Activated B cell treated with CpG ODN at 0.5 μM for 24 hours (primary cell): ENCODE measurements at regions of chr1 and their contacts with region 1.

Region 1: DNA sequence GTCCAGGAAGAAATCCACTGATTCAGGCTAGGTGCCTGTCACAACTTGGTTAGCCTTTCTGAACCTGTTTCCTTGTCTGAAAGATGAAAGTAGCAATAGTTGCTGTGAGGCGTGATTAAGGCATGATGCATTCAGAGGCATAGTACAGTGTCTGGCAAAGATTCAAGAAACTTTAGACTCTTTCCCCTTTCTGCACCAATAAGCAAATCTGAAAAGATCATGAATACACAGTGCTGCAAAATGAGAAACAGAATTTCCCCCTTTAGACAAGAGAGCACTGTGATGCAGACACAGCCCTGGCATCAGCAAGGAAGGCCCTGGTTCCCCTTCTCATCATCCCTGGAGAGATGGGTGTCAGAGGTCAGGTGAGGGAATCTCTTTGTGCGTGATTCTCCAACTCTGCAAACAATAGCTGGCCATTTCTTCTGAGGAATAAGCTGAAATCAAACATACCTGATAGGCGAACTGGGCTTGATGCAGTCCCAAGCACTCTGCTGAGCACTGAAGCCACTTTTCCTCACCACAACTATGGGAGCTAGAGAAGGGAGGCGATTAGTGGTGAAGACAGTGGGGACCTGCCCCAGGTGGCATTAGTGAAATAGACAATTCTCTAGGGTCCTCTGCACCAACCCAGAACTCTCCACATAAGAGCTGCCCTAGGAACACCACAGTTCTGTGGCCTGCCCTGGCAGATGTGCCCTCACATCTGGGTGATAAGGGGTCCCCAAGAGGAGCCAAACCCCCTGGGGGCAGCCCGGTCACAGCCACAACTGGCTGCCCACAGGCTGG is 41.7 kb downstream of the ITPKB start:
- DNase-seq: peak; percentile 54
- ATAC-seq: peak; percentile 82
- H3K4me3 Mint-ChIP-seq: peak overlapping the region; percentile 77
- H3K27ac Mint-ChIP-seq: peak overlapping the region; percentile 96
- H3K4me1 Mint-ChIP-seq: peaks cover 94% of the 10 kb centered on the region
- H3K27me3 Mint-ChIP-seq: no peaks in the 10 kb centered on the region
- CTCF ChIP-seq: no peak

Region 2: DNA sequence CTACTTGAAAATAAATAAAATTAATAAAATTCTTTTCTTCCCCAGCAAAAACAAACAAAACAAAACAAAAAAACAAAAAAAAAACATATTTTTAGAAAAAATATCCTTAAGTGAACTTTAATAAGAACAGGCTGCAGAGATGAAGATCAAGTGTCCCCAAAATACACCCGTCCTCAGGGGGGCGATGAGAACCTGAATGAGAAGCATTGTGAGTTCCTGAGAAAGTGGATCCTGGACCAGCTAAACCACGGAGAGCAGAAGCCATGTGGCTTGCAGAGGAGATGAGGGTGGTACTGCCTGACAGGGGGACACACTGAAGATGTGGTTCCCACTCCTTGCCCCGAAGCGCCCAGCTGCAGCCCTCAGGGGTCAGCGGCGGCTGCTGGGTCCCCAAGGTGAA is 47.6 kb before region 1 on chr1:
- CTCF ChIA-PET with region 1: interaction called, 4 read pairs
- POLR2A ChIA-PET with region 1: interaction called, 86 read pairs
- intact Hi-C with region 1: no loop called
- DNase-seq: no peak
- ATAC-seq: no peak
- H3K4me3 Mint-ChIP-seq: no peak overlapping the region
- H3K27ac Mint-ChIP-seq: peak overlapping the region; percentile 11
- H3K4me1 Mint-ChIP-seq: peaks cover 43% of the 10 kb centered on the region
- H3K27me3 Mint-ChIP-seq: no peaks in the 10 kb centered on the region
- CTCF ChIP-seq: no peak

Region 3: GRCh38 chr1:226708342-226708780 is 11.0 kb after region 1 on chr1:
- CTCF ChIA-PET with region 1: interaction called, 3 read pairs
- POLR2A ChIA-PET with region 1: interaction called, 28 read pairs
- intact Hi-C with region 1: loop called (anchors 2 kb)
- DNase-seq: no peak
- ATAC-seq: no peak
- H3K4me3 Mint-ChIP-seq: no peak overlapping the region
- H3K27ac Mint-ChIP-seq: peak overlapping the region; percentile 76
- H3K4me1 Mint-ChIP-seq: peaks cover 85% of the 10 kb centered on the region
- H3K27me3 Mint-ChIP-seq: no peaks in the 10 kb centered on the region
- CTCF ChIP-seq: no peak